Adrenal gland (tissue), 19 donors: ENCODE measurements at regions of chr6 and their contacts with region 1.

Region 1: DNA sequence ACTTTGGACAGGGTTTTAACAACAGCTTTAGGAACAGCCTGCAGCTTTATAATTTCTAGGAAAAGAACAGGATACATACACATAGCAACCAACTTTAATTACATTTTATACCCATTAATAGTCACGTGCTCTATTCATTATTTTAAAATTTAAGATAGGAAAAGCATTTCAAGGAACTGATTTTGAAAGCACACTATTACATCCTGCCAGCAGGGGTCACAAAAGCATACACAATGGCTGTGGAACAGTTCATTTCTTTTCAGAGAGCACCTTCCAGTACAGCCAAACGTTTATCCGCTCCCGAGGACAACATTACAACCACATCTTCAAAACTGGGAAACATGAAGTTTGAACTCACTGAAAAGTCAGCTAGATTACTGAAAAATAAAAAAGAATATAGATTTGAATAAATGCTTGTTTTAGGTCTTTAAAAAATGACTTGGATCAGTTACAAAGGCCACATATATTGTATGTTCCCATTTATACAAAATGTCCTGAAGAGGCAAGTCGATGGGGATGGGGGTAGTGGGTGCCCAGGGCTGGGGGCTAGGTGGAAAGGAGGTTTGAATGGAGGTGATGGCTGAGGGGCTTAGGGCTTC is 104.6 kb upstream of the EXOC2 start:
- DNase-seq: peak; percentile 35 to 64 (median 41)
- H3K4me3 ChIP-seq: no peak overlapping the region
- H3K27ac ChIP-seq: no peak overlapping the region
- H3K4me1 ChIP-seq: no peaks in the 10 kb centered on the region
- H3K27me3 ChIP-seq: peaks cover 22% of the 10 kb centered on the region
- CTCF ChIP-seq: peak; percentile 60 to 89 (median 80)
- POLR2A ChIP-seq: no peak

Region 2: DNA sequence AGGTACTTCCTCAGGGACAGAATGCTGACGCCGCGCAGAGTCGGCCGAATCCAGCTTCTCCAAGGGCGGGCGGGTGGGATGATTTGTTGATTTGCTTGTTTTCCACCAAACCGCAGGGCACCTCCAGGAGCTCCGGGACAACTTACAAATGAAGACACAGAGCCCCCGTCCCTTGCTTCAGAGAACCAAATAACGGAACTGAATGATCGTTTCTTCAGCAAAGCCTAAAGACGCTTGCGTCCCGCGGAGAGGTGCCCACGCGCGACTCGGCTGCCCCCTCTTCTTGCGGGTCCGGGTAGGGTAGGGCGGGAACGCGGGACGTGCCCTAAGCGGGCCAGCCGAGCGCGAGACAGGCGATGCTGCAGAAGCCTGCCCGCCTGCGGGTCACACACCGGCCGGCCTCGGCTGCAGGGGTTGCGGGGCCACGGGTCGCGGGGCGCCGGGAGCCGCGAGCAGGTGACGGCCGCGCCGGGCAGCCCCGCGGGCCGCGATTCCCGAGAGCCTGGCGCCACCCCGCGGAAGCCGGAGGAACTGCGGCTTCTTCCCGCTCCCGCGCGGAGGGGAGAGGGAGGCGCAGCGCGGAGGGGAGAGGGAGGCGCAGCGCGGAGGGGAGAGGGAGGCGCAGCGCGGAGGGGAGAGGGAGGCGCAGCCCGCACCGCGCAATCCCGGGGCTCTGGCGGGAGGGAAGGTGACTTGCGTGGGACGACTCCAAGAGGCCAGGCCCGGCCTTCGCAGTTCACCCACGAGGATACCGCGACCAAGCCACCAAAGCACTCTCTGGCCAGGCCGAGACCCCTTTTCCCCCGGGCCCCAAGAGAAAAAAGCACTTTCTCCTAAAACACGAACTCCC is 584.1 kb after region 1 on chr6:
- intact Hi-C with region 1: loop called in 1 of 2 experiments (anchors 5 kb)
- DNase-seq: peak in 5 of 7 donors; percentile 32 to 55 (median 39)
- H3K4me3 ChIP-seq: peak overlapping the region in 1 of 4 donors; percentile 53
- H3K27ac ChIP-seq: no peak overlapping the region
- H3K4me1 ChIP-seq: peaks cover 5 to 29% of the 10 kb centered on the region in 2 donors
- H3K27me3 ChIP-seq: peaks cover 100% of the 10 kb centered on the region
- CTCF ChIP-seq: peak; percentile 33 to 91 (median 72)
- POLR2A ChIP-seq: no peak